Activated T-helper 2 cell treated with anti-CD3 and anti-CD28 coated beads, Interferon-gamma antibody, Interleukin-2, Interleukin-4, amounts not matched to agents 10 μg/mL and 5 μg/mL and 100 μg/mL, durations not matched to agents 14 hours and 24 hours and 36 hours (primary cell): ENCODE measurements at regions of chrX and their contacts with region 1.

Region 1: GRCh38 chrX:39331082-39331704 is 529.9 kb downstream of the MID1IP1 start:
- DNase-seq: no peak
- H3K4me3 Mint-ChIP-seq: peak overlapping the region; percentile 17
- H3K27ac Mint-ChIP-seq: peak overlapping the region; percentile 97
- H3K4me1 Mint-ChIP-seq: peaks cover 71% of the 10 kb centered on the region
- H3K27me3 Mint-ChIP-seq: no peaks in the 10 kb centered on the region

Region 2: GRCh38 chrX:38811515-38812243 is 519.5 kb before region 1 on chrX:
- intact Hi-C with region 1: loop called (anchors 5 kb)
- DNase-seq: no peak
- H3K4me3 Mint-ChIP-seq: peak overlapping the region; percentile 20
- H3K27ac Mint-ChIP-seq: peak overlapping the region; percentile 93
- H3K4me1 Mint-ChIP-seq: peaks cover 36% of the 10 kb centered on the region
- H3K27me3 Mint-ChIP-seq: no peaks in the 10 kb centered on the region

Region 3: GRCh38 chrX:39261446-39262147 is 69.6 kb before region 1 on chrX:
- intact Hi-C with region 1: loop called (anchors 1 kb)
- DNase-seq: no peak
- H3K4me3 Mint-ChIP-seq: no peak overlapping the region
- H3K27ac Mint-ChIP-seq: peak overlapping the region; percentile 75
- H3K4me1 Mint-ChIP-seq: peaks cover 40% of the 10 kb centered on the region
- H3K27me3 Mint-ChIP-seq: no peaks in the 10 kb centered on the region

Region 4: DNA sequence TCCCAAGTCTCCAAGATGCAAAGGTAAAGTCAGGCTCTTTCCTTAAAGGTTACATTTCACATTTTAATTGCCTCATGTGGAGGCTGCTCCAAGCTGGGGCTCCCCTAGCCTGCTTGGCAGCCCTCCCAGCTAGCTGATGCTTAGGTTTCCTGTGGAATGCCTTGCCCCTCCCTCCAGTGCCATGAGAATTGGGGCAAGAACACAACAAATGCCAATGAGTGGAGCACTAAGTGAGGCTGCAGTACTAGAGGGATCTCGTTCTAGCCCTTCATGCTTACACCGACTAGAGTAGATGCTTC is 67.7 kb after region 1 on chrX:
- intact Hi-C with region 1: no loop called
- DNase-seq: no peak
- H3K4me3 Mint-ChIP-seq: no peak overlapping the region
- H3K27ac Mint-ChIP-seq: no peak overlapping the region
- H3K4me1 Mint-ChIP-seq: peaks cover 8% of the 10 kb centered on the region
- H3K27me3 Mint-ChIP-seq: no peaks in the 10 kb centered on the region

Region 5: GRCh38 chrX:39427906-39428305 is 96.7 kb after region 1 on chrX:
- intact Hi-C with region 1: loop called (anchors 1 kb)
- DNase-seq: no peak
- H3K4me3 Mint-ChIP-seq: no peak overlapping the region
- H3K27ac Mint-ChIP-seq: peak overlapping the region; percentile 96
- H3K4me1 Mint-ChIP-seq: peaks cover 60% of the 10 kb centered on the region
- H3K27me3 Mint-ChIP-seq: no peaks in the 10 kb centered on the region

Region 6: GRCh38 chrX:39578354-39578869 is 247.2 kb after region 1 on chrX:
- intact Hi-C with region 1: loop called (anchors 1 kb)
- DNase-seq: peak; percentile 31
- H3K4me3 Mint-ChIP-seq: peak overlapping the region; percentile 52
- H3K27ac Mint-ChIP-seq: peak overlapping the region; percentile 76
- H3K4me1 Mint-ChIP-seq: peaks cover 34% of the 10 kb centered on the region
- H3K27me3 Mint-ChIP-seq: no peaks in the 10 kb centered on the region

Region 7: GRCh38 chrX:40169193-40170101 is 838.3 kb after region 1 on chrX:
- intact Hi-C with region 1: loop called (anchors 5 kb)
- DNase-seq: peak; percentile 80
- H3K4me3 Mint-ChIP-seq: peak overlapping the region; percentile 81
- H3K27ac Mint-ChIP-seq: peak overlapping the region; percentile 94
- H3K4me1 Mint-ChIP-seq: peaks cover 37% of the 10 kb centered on the region
- H3K27me3 Mint-ChIP-seq: no peaks in the 10 kb centered on the region